Mucosa of descending colon (tissue), 3 donors: ENCODE measurements at regions of chr3 and their contacts with region 1.

Region 1: DNA sequence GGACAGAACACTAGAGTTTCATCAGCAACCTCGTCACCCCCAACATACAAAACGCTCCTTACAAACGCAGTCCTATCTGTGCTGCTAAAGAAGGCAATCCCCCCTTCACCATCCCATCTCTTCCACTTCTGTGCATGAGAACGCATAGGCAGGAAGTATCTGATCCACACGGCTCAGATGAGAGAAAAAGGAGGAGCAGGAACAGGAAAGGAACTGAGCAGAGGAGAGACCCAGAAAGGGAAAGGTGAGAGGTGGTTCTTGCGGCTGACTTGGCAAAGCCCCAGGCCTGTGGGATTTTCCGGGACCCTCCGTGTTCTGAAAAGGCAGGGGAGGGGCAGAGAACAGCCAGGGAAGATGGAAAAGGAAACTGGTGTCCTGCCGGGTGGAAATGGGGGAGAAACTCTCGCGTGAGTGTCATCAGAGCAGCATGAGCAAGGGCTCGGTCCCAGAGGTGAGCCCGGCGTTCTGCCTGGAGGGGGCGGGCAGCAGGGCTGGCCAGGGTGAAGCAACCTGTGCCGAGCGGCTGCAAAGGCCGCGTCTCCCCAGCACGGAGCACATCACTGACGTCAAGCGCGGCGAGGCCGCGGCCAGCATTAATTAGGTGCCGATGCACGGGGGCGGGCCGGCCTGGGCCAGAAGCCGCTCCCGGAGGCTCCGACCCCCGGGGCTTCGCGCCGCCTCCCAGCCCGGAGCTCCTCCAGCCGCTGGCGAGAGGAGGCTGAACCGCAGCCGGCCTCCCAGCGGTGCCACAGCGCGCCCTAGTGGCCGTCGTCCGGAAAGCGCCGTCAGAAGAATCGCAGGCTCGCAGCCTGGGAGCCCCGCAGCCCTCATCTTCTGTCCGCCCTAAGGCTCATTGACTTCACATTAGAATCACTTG is 35.8 kb downstream of the CPN2 start:
- DNase-seq: peak; percentile 83 to 90 (median 87)
- ATAC-seq: peak; percentile 94
- H3K4me3 ChIP-seq: no peak overlapping the region
- H3K4me1 ChIP-seq: peaks cover 6% of the 10 kb centered on the region
- CTCF ChIP-seq: peak; percentile 91

Region 2: DNA sequence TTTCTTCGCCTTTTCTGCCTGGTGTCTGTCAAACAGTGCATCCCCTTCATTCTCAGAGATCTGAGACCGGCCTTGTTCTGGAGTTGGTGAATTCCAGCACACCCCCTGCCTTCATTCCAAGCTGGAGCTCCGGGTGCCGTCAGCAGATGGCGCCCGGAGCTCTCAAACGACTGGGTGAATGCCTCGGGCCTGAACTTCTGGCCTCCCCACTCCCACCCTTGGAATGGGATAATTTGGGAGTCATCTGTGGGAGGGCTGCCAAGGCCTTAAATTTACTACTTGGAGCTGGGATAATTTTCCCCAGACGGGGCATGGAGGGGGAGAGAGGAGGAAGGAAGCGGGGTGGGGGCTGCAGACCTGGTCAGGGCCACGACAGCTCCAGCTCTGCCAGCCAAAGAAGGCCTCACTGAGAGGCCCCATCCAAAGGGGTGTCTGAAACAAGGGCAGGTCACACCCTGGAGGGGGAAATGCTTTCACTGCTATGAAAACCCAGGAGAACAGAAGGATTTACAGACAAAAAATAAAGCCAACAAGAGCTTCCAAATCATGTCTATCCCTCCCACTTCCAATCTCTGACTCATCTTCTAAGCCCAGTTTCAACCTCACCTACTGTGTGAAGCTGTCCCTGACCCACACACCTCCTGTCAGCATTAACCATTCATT is 534.4 kb before region 1 on chr3:
- intact Hi-C with region 1: loop called (anchors 5 to 10 kb)
- DNase-seq: peak; percentile 67 to 82 (median 81)
- ATAC-seq: peak; percentile 80
- H3K4me3 ChIP-seq: no peak overlapping the region
- H3K4me1 ChIP-seq: peaks cover 7% of the 10 kb centered on the region
- CTCF ChIP-seq: peak; percentile 63

Region 3: DNA sequence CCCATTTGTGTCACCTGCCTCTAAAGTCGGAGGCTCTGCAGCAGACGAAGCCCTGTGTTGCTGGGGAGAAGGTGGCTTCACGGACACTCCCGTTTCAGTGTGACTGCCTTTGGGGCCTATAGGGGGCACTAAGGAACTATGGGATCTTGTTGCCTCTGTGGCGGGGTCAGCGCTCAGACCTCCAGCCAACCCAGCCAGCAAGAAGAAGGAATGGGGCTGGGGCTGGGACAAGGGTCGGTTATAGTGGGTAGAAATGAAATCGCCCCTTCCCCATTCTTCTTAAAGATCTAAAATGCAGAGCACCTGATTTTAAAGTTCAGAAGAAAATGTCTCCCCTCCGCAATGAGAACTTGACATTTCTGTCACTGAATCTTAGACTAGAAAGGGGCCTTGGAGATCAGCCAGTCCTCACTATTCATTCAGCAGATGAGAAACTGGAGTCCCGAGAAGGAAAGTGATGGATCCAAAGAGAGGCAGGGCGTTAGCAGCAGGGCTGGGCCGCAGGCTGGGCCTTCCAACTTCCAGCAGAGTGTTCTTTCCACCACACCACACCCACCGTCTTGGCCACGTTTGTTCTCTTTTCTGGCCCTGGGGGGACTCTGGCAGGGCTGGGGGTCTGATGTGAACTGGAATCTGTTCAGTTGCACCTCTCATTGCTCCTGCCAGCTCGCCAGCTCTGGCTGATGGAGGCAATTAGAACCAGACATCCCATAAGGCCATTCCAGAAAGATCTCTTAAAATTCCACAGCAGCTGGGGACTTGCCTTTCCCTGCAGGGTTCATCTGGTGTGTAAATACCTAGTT is 526.9 kb before region 1 on chr3:
- intact Hi-C with region 1: loop called (anchors 5 to 10 kb)
- DNase-seq: peak; percentile 56 to 69 (median 62)
- ATAC-seq: peak; percentile 91
- H3K4me3 ChIP-seq: no peak overlapping the region
- H3K4me1 ChIP-seq: peaks cover 9% of the 10 kb centered on the region
- CTCF ChIP-seq: peak; percentile 59

Region 4: DNA sequence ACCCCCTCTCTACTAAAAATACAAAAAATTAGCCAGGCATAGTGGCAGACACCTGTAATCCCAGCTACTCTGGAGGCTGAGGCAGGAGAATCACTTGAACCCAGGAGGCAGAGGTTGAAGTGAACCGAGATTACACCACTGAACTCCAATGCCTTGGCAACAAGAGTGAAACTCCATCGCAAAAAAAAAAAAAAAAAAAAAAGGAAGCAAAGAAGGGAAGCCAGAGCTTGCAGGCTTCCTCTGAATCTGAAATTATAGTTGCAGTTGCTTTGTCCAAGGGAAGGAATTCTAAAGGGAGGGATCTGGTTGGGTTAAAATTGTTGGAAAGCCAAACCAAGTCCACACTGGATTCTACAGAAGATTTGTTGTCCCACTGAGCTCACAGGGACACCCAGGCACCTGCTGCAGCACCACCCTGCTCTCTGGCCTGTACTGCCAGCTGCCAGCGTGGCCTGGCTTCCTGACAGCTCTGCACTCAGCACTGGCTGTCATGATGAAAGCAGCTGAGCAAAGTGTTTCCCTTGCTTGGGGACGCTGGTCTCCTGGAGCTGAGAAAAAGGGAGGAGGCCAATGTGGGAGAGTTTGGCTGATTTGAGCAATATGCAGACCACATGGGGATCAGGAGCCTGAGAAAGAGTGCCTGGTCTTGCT is 268.2 kb before region 1 on chr3:
- intact Hi-C with region 1: no loop called
- DNase-seq: peak; percentile 81 to 85 (median 82)
- ATAC-seq: peak; percentile 74
- H3K4me3 ChIP-seq: no peak overlapping the region
- H3K4me1 ChIP-seq: peaks cover 24% of the 10 kb centered on the region
- CTCF ChIP-seq: no peak

Region 5: DNA sequence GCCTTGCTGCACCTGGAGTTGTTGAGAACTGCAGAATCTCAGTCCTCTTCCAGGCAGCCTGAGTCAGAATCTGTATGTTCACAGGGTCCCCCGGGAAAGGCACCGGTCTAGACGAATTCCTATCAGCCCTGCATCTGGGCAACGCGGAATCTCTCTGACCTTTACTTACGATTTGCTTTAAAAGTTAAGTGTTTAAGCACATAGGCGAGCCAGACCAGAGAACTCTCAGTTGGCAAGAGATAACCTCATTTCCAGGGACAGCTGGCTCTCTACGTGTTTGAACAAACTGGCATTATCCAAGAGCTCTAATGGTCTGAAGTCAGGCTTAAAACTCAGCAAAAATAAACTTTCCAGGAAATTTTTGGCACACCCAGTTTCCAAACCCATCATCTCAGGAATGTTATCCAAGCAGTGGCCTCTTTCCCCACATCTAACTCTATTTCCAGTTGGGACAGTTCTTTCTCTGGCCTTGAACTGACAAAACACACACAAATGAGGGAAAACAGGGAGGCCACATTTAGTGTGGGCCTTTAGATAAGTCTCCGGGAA is 126.0 kb before region 1 on chr3:
- intact Hi-C with region 1: no loop called
- DNase-seq: no peak
- ATAC-seq: no peak
- H3K4me3 ChIP-seq: no peak overlapping the region
- H3K4me1 ChIP-seq: peaks cover 5% of the 10 kb centered on the region
- CTCF ChIP-seq: no peak